Heart left ventricle (tissue), 16 donors: ENCODE measurements at regions of chr16 and their contacts with region 1.

Region 1: GRCh38 chr16:69112285-69113129 is 7.1 kb downstream of the HAS3 start:
- DNase-seq: peak in 4 of 5 donors; percentile 50 to 81 (median 59)
- ATAC-seq: peak in 3 of 4 donors; percentile 38 to 60 (median 46)
- H3K4me3 ChIP-seq: no peak overlapping the region
- H3K27ac ChIP-seq: no peak overlapping the region
- H3K4me1 ChIP-seq: peaks cover 0 to 43% (median 23%) of the 10 kb centered on the region in 12 donors
- H3K27me3 ChIP-seq: peaks cover 0 to 7% (median 0%) of the 10 kb centered on the region in 9 donors
- CTCF ChIP-seq: peak; percentile 43 to 77 (median 63)
- POLR2A ChIP-seq: no peak

Region 2: DNA sequence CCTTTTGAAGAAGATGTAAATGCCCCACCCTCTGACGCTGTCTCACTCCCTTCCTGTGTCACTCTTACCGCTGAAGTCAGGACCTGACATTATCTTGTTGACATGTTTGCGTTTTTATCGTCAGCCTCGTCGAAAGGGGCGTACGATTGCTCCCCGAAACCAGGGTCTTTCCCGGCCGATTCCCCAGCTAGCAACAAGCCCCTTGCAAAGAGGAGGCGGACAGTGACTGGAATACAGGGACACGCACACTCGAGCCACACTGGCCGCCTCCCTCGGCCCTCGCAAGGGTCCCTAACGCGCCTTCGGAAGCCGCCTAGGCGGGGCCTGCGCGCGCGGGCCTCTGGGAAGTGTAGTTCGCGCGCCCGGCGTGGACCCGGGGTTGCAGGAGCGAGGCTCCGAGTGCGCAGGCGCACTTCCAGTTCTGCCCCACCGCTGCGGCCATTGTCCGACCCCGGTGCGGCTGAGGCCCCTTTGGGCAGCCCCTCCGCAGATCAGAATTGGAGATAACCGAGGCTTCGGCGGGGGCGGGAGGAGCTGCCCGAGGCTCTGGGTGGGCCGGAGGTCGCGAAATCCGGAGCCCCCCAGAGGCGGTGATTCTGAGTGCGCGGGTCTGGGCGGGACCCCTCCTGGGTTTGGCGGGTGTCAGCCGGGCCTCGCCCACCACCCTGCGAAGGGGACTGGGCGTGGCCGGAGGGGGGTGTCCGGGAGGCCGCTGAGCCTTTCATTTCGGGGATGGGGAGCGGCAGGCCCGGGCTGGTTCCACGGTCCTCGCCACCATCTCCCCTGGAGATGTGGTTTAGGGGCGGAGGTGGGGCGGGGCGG is 573.4 kb before region 1 on chr16 and contains the start of gene ZFP90:
- intact Hi-C with region 1: loop called in 1 of 10 experiments (anchors 10 kb)
- DNase-seq: peak; percentile 88 to 95 (median 91)
- ATAC-seq: peak; percentile 96 to 100 (median 100)
- H3K4me3 ChIP-seq: peak within 1 kb of the TSS; percentile 71 to 100 (median 89)
- H3K27ac ChIP-seq: peak within 1 kb of the TSS; percentile 28 to 88 (median 78)
- H3K4me1 ChIP-seq: peaks cover 0 to 13% (median 6%) of the 10 kb centered on the region in 12 donors
- H3K27me3 ChIP-seq: no peaks in the 10 kb centered on the region
- CTCF ChIP-seq: peak in 1 of 12 donors; percentile 19
- POLR2A ChIP-seq: peak in 1 of 2 donors; percentile 71
- total RNA-seq, gene ZFP90: 6.9 to 18.1 (median 12.0) TPM

Region 3: DNA sequence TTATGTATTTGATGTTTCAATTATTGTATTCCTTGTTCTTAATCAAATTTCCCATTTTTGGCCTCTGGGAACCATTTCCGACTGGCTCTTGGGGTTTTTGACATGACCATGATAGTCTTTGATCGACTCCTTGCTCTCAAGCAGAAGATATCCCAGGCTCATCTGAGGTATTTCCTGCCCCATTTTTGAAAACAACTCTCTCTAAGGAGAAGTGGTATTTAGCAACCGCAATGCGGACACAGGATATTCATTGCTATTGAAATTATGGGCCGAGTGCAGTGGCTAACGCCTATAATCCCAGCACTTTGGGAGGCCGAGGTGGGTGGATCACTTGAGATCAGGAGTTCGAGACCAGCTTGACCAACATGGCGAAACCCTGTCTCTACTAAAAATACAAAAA is 263.7 kb before region 1 on chr16:
- intact Hi-C with region 1: loop called in 1 of 10 experiments (anchors 5 kb)
- DNase-seq: no peak
- ATAC-seq: no peak
- H3K4me3 ChIP-seq: no peak overlapping the region
- H3K27ac ChIP-seq: no peak overlapping the region
- H3K4me1 ChIP-seq: peaks cover 0 to 15% (median 5%) of the 10 kb centered on the region in 12 donors
- H3K27me3 ChIP-seq: no peaks in the 10 kb centered on the region
- CTCF ChIP-seq: no peak
- POLR2A ChIP-seq: no peak

Region 4: GRCh38 chr16:68972720-68973119 is 139.8 kb before region 1 on chr16:
- intact Hi-C with region 1: loop called in 3 of 10 experiments (anchors 10 kb)
- DNase-seq: peak in 1 of 5 donors; percentile 20
- ATAC-seq: peak in 1 of 4 donors; percentile 72
- H3K4me3 ChIP-seq: no peak overlapping the region
- H3K27ac ChIP-seq: no peak overlapping the region
- H3K4me1 ChIP-seq: peaks cover 0 to 5% (median 0%) of the 10 kb centered on the region in 12 donors
- H3K27me3 ChIP-seq: no peaks in the 10 kb centered on the region
- CTCF ChIP-seq: peak in 5 of 12 donors; percentile 11 to 31 (median 28)
- POLR2A ChIP-seq: no peak

Region 5: GRCh38 chr16:68985855-68986254 is 126.7 kb before region 1 on chr16:
- intact Hi-C with region 1: loop called in 1 of 10 experiments (anchors 10 kb)
- DNase-seq: no peak
- ATAC-seq: peak in 3 of 4 donors; percentile 48 to 95 (median 88)
- H3K4me3 ChIP-seq: no peak overlapping the region
- H3K27ac ChIP-seq: peak overlapping the region in 2 of 12 donors; percentile 14 to 20
- H3K4me1 ChIP-seq: no peaks in the 10 kb centered on the region
- H3K27me3 ChIP-seq: no peaks in the 10 kb centered on the region
- CTCF ChIP-seq: no peak
- POLR2A ChIP-seq: no peak